Activated CD4-positive, alpha-beta memory T cell treated with anti-CD3 and anti-CD28 coated beads, Interleukin-2, amount 10 ng/mL, durations not matched to agents 7 days and 5 days (primary cell): ENCODE measurements at regions of chr9 and their contacts with region 1.

Region 1: GRCh38 chr9:75088260-75088905 is at the start of gene OSTF1:
- DNase-seq: peak; percentile 95
- H3K4me3 Mint-ChIP-seq: peak within 1 kb of the TSS; percentile 100
- H3K27ac Mint-ChIP-seq: peak within 1 kb of the TSS; percentile 97
- H3K4me1 Mint-ChIP-seq: peaks cover 63% of the 10 kb centered on the region
- H3K27me3 Mint-ChIP-seq: no peaks in the 10 kb centered on the region
- total RNA-seq, gene OSTF1: 253 to 255 TPM

Region 2: GRCh38 chr9:74672237-74672636 is 416.1 kb before region 1 on chr9:
- CTCF ChIA-PET with region 1: no interaction called
- POLR2A ChIA-PET with region 1: no interaction called
- DNase-seq: no peak
- H3K4me3 Mint-ChIP-seq: no peak overlapping the region
- H3K27ac Mint-ChIP-seq: no peak overlapping the region
- H3K4me1 Mint-ChIP-seq: no peaks in the 10 kb centered on the region
- H3K27me3 Mint-ChIP-seq: no peaks in the 10 kb centered on the region

Region 3: DNA sequence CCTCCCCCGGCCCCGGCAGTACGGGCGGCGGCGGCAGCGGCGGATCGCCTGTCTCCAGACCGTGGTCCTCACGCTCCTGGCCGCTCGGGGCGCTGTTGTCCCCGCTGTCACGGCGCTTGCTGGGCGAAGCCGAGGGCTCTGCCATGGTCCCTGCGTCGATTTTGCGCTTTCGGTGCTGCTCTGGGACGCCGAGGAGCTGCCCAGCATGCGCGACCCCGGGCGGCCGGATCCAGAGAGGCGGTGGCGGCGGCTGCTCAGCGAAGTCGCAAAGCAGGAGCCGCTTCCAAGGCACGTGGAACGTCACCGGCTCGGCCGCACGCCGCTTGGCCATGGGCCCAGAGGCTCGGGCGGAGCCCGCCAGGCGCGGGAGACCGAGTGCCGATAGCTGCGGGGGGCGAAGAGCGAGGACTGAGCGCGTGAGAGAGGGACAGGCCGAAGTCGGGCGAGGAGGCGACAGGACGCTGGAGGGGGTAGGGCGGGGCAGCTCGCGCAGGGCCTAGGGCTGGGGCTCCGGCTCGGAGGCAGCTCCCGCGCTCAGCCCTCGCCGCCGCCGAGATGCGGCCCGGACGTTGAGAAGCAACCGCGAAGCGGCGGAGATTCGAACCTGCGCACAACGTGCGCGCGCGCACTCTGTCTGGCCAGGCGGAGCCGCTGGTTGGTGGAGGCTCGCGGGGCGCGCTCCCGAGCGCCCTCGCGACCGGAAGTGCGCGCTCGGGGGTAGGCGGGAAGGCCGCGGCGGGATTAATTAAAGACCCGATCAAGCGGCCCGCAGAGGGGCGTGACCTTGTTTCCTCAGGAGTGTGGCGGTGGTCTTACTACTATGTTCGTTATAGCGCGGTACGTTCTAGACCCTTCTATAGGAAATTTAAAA is 135.9 kb before region 1 on chr9 and contains the start of gene C9orf40:
- CTCF ChIA-PET with region 1: interaction called, 40 read pairs
- POLR2A ChIA-PET with region 1: interaction called, 76 read pairs
- DNase-seq: peak; percentile 92
- H3K4me3 Mint-ChIP-seq: peak within 1 kb of the TSS; percentile 91
- H3K27ac Mint-ChIP-seq: peak within 1 kb of the TSS; percentile 90
- H3K4me1 Mint-ChIP-seq: peaks cover 54% of the 10 kb centered on the region
- H3K27me3 Mint-ChIP-seq: no peaks in the 10 kb centered on the region
- total RNA-seq, gene C9orf40: 22.2 to 23.4 TPM

Region 4: GRCh38 chr9:75027187-75028107 is 60.9 kb before region 1 on chr9:
- CTCF ChIA-PET with region 1: interaction called, 37 read pairs
- POLR2A ChIA-PET with region 1: interaction called, 98 read pairs
- DNase-seq: peak; percentile 59
- H3K4me3 Mint-ChIP-seq: peak overlapping the region; percentile 98
- H3K27ac Mint-ChIP-seq: peak overlapping the region; percentile 97
- H3K4me1 Mint-ChIP-seq: peaks cover 44% of the 10 kb centered on the region
- H3K27me3 Mint-ChIP-seq: peaks cover 1% of the 10 kb centered on the region

Region 5: DNA sequence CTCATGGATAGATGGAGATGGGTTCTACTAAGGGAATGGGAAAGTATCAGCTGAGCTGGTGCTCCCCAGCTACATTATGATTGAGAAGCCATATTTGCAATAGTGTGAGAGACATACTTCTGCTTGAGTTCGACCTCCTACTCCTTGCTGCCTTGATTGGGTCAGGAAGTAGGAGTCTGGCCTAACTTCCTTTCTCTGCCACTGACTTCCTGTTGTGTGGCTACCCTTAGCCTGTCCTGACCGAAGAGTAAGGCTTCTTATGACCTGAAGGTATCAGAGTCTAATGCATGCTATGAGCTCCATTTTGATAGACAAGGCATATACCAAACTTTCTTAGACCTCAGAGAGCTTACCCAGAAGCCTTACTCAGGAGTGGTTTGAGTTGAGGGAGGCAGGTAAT is 53.8 kb after region 1 on chr9:
- CTCF ChIA-PET with region 1: interaction called, 15 read pairs
- POLR2A ChIA-PET with region 1: interaction called, 281 read pairs
- DNase-seq: peak; percentile 37
- H3K4me3 Mint-ChIP-seq: peak overlapping the region; percentile 33
- H3K27ac Mint-ChIP-seq: peak overlapping the region; percentile 78
- H3K4me1 Mint-ChIP-seq: peaks cover 85% of the 10 kb centered on the region
- H3K27me3 Mint-ChIP-seq: no peaks in the 10 kb centered on the region

Region 6: GRCh38 chr9:75170898-75171360 is 82.5 kb after region 1 on chr9:
- CTCF ChIA-PET with region 1: interaction called, 3 read pairs
- POLR2A ChIA-PET with region 1: interaction called, 26 read pairs
- DNase-seq: no peak
- H3K4me3 Mint-ChIP-seq: no peak overlapping the region
- H3K27ac Mint-ChIP-seq: peak overlapping the region; percentile 59
- H3K4me1 Mint-ChIP-seq: peaks cover 66% of the 10 kb centered on the region
- H3K27me3 Mint-ChIP-seq: no peaks in the 10 kb centered on the region

Region 7: GRCh38 chr9:75265525-75265972 is 177.2 kb after region 1 on chr9:
- CTCF ChIA-PET with region 1: no interaction called
- POLR2A ChIA-PET with region 1: no interaction called
- DNase-seq: peak; percentile 46
- H3K4me3 Mint-ChIP-seq: no peak overlapping the region
- H3K27ac Mint-ChIP-seq: no peak overlapping the region
- H3K4me1 Mint-ChIP-seq: no peaks in the 10 kb centered on the region
- H3K27me3 Mint-ChIP-seq: no peaks in the 10 kb centered on the region